ENCODE measurements at regions of chr1 and their contacts with region 1.

Region 1: GRCh38 chr1:12184008-12184681 is 17.4 kb downstream of the TNFRSF1B start:
- DNase-seq: peak; percentile 60 to 67
- H3K4me3 ChIP-seq: peak overlapping the region in 2 of 3 donors; percentile 24 to 46
- H3K27ac ChIP-seq: peak overlapping the region; percentile 87 to 95
- H3K4me1 ChIP-seq: peaks cover 7 to 15% of the 10 kb centered on the region in 2 donors
- H3K27me3 ChIP-seq: no peaks in the 10 kb centered on the region
- CTCF ChIP-seq: peak in 1 of 3 donors; percentile 11
- POLR2A ChIP-seq: no peak

Region 2: DNA sequence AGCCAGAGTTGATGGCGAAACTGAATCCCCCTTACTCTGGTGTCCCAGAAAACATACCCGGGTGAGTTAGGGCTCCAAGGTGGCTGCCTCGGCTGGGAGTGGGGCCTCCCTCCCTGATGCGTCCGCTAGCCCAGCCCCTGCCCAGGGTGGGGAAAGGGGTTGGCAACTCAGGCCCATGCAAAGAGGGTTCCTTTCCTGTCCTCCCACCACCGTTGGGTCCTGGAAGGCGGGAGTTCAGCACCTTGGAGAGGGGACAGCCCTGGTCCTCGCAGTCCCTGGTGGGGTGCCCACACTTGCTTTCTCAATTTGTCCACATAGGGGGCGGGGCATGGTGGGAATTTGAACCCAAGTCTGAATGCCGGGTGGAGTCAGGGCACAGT is 1130.4 kb before region 1 on chr1:
- intact Hi-C with region 1: loop called (anchors 5 kb)
- DNase-seq: no peak
- H3K4me3 ChIP-seq: no peak overlapping the region
- H3K27ac ChIP-seq: no peak overlapping the region
- H3K4me1 ChIP-seq: peaks cover 0 to 3% of the 10 kb centered on the region in 2 donors
- H3K27me3 ChIP-seq: no peaks in the 10 kb centered on the region
- CTCF ChIP-seq: no peak
- POLR2A ChIP-seq: no peak

Region 3: DNA sequence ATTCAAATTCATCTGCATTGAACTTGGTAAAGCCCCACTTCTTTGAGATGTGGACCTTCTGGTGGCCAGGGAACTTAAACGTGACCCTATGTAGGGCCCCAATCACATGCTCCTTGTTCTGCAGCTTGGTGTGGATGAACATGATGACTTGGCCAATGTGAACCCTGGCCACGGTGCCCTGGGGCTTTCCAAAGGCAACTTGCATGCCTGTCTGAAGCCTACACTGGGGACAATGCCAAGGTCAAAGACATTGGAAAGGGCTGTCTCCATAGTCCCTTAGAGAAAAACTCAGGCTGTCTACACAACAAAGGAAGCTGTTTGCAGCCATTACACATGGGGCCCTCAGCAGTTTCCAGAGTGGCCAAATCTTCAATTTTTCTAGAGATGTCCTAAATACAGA is 36.7 kb after region 1 on chr1:
- intact Hi-C with region 1: loop called (anchors 1 kb)
- DNase-seq: no peak
- H3K4me3 ChIP-seq: no peak overlapping the region
- H3K27ac ChIP-seq: no peak overlapping the region
- H3K4me1 ChIP-seq: no peaks in the 10 kb centered on the region
- H3K27me3 ChIP-seq: no peaks in the 10 kb centered on the region
- CTCF ChIP-seq: no peak
- POLR2A ChIP-seq: no peak

Measured in breast epithelium (tissue), 4 donors.